Breast epithelium (tissue), 4 donors: ENCODE measurements at regions of chr17 and their contacts with region 1.

Region 1: GRCh38 chr17:76121932-76122430 is 18.4 kb upstream of the EXOC7 start:
- DNase-seq: no peak
- H3K4me3 ChIP-seq: peak overlapping the region; percentile 37 to 67 (median 45)
- H3K27ac ChIP-seq: peak overlapping the region; percentile 10 to 12
- H3K4me1 ChIP-seq: peaks cover 0 to 6% of the 10 kb centered on the region in 2 donors
- H3K27me3 ChIP-seq: no peaks in the 10 kb centered on the region
- CTCF ChIP-seq: no peak
- POLR2A ChIP-seq: no peak

Region 2: GRCh38 chr17:76088036-76088867 is 33.7 kb before region 1 on chr17:
- intact Hi-C with region 1: no loop called
- DNase-seq: no peak
- H3K4me3 ChIP-seq: no peak overlapping the region
- H3K27ac ChIP-seq: no peak overlapping the region
- H3K4me1 ChIP-seq: no peaks in the 10 kb centered on the region
- H3K27me3 ChIP-seq: no peaks in the 10 kb centered on the region
- CTCF ChIP-seq: no peak
- POLR2A ChIP-seq: no peak

Region 3: DNA sequence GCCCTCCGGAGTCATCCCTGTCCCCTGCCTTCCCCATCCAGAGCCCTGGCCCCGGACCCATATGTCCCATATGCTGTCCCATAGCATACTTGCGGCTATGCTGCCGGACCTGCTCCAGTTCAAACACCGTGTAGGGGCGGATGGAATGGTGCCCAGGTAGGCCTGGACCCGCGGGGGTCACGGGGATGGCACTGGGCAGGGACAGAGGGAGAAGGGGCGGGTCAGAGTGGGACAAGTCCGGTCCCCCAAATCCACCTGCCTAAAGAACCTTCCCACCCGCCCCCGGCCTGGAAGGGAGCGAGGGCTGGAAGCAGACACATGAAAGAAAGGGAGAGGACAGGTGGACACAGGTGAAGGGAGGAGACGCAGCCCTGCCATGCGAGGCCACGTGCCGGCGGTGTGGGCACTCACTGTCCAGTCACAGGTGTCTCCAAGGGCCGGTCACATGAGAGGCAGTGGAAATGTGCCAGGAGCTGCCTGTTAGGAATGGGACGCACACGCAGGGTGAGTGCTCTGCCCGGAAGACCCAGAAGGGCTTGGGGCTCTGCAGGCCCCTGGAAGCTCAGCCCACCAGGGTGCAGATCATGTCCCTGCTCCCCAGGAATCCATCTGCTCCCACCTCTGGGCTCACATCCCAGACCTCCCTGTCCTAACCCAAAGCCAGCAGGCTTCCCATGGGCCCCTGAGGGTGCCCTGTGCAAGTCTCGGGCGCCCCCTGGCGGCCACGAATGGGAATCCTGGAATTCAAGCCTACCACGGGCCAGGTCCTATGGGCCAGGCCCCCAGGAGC is 157.2 kb after region 1 on chr17:
- intact Hi-C with region 1: loop called (anchors 1 kb)
- DNase-seq: peak; percentile 78 to 86
- H3K4me3 ChIP-seq: no peak overlapping the region
- H3K27ac ChIP-seq: no peak overlapping the region
- H3K4me1 ChIP-seq: peaks cover 0 to 7% of the 10 kb centered on the region in 2 donors
- H3K27me3 ChIP-seq: no peaks in the 10 kb centered on the region
- CTCF ChIP-seq: peak; percentile 96 to 97 (median 97)
- POLR2A ChIP-seq: no peak